ENCODE measurements at regions of chr15 and their contacts with region 1.

Region 1: DNA sequence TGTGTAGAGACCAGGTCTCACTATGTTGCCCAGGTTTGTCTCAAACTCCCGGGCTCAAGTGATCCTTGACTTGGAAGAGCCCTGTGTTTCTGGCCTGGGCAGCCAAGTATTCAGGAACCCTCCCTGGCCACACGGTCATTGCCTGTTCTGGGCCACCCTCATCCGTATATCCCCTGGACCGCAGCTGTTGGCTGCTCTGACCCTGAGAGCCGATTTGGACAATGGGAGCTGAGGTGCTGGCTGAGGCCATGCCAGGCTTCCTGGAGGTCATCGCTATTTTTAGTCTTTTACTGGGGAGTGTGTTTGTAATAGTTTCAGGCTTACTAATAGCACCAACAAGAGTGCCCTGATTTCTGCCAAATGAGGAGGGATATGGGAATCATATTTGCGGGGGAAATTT is 60.7 kb downstream of the ADAMTS7 start:
- DNase-seq: no peak
- ATAC-seq: no peak
- H3K4me3 Mint-ChIP-seq: peak overlapping the region; percentile 44
- H3K27ac Mint-ChIP-seq: peak overlapping the region; percentile 18
- H3K4me1 Mint-ChIP-seq: peaks cover 8% of the 10 kb centered on the region
- H3K27me3 Mint-ChIP-seq: no peaks in the 10 kb centered on the region
- CTCF ChIP-seq: no peak

Region 2: GRCh38 chr15:78149068-78149804 is 601.3 kb before region 1 on chr15 and contains the start of gene IDH3A:
- CTCF ChIA-PET with region 1: no interaction called
- POLR2A ChIA-PET with region 1: no interaction called
- intact Hi-C with region 1: no loop called
- DNase-seq: peak; percentile 99
- ATAC-seq: peak; percentile 97
- H3K4me3 Mint-ChIP-seq: peak within 1 kb of the TSS; percentile 94
- H3K27ac Mint-ChIP-seq: peak within 1 kb of the TSS; percentile 91
- H3K4me1 Mint-ChIP-seq: peaks cover 46% of the 10 kb centered on the region
- H3K27me3 Mint-ChIP-seq: no peaks in the 10 kb centered on the region
- CTCF ChIP-seq: no peak
- total RNA-seq, gene IDH3A: 111 and 124 TPM in 2 replicates

Region 3: GRCh38 chr15:78308422-78309032 is 442.0 kb before region 1 on chr15:
- CTCF ChIA-PET with region 1: no interaction called
- POLR2A ChIA-PET with region 1: no interaction called
- intact Hi-C with region 1: loop called (anchors 2 kb)
- DNase-seq: no peak
- ATAC-seq: peak; percentile 61
- H3K4me3 Mint-ChIP-seq: no peak overlapping the region
- H3K27ac Mint-ChIP-seq: no peak overlapping the region
- H3K4me1 Mint-ChIP-seq: no peaks in the 10 kb centered on the region
- H3K27me3 Mint-ChIP-seq: peaks cover 13% of the 10 kb centered on the region
- CTCF ChIP-seq: no peak

Region 4: DNA sequence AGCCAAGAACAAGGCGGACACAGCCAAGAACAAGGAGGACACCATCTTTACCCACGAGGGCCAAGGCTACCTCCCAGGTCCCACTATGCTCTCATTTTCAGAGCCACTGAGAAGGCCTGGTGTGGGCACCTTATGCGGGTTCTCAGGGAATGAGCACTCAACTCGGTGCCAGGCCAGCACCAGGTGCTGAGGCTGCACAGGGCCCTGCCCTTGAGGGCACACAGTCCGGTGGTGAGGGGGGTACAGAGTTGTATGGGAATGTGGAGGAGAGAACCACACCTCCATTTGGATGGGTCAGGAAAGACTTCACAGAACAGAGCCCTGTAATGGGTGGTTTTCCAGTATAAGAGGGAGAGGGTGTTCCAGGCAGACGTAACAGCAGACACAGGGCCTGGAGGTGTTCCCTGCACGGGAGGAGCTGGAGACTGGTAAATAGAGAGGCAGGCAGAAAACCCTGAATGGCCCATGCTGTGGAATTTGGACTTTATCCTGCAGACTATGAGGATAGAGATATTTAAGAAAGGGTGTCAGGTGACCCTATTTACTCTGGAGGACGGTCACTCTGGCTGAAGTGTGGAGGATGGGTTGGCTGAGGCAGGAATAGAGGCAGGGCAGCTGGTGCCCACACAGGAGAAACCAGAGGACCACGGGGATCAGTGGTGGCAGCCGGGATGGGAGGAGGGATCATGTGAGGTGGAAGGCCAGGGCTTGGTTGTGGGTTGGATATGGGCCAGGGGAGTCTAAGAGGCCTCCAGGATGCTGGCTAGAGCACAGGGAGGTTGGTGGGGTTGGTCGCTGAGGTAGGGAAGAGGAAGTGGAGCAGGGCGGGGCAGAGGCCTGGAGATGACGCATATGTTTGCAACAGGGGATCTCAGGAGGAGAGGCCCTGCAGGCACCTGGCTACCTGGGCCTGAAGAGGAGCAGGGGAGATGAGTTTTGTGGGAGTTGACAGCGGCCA is 375.9 kb before region 1 on chr15:
- CTCF ChIA-PET with region 1: no interaction called
- POLR2A ChIA-PET with region 1: no interaction called
- intact Hi-C with region 1: no loop called
- DNase-seq: no peak
- ATAC-seq: no peak
- H3K4me3 Mint-ChIP-seq: no peak overlapping the region
- H3K27ac Mint-ChIP-seq: no peak overlapping the region
- H3K4me1 Mint-ChIP-seq: no peaks in the 10 kb centered on the region
- H3K27me3 Mint-ChIP-seq: peaks cover 15% of the 10 kb centered on the region
- CTCF ChIP-seq: no peak

Region 5: DNA sequence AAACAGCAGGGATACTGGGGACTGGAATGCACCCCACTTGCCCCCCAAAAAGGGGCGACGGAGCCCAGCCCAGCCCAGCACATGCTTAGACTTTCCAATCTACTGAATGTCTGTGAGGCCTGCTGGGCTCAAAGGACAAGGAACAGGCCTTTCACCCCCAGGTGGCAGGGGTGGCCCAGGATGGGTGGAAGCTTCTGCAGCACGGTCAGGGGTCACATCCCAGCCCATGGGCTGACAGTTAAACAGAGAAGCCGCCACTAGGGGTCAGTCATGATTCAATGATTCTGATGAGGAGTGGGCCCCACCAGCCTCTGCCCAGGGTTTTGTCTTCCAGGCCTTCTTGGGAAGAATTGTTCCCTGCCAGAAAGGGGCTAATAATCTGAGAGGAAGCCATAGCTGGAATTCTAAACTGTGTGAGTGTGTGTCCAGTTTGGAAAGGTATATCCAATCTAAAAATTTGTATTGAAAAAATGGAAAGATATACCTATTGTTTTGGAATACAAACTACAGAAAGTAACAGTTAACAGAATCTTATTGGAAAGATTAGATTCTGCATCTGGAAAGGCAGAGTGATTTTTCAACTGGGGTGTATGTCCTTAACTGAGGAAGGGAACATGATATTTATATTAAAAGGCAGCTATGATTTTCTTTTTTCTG is 111.8 kb before region 1 on chr15:
- CTCF ChIA-PET with region 1: interaction called, 4 read pairs
- POLR2A ChIA-PET with region 1: no interaction called
- intact Hi-C with region 1: loop called (anchors 1 kb)
- DNase-seq: no peak
- ATAC-seq: peak; percentile 69
- H3K4me3 Mint-ChIP-seq: no peak overlapping the region
- H3K27ac Mint-ChIP-seq: no peak overlapping the region
- H3K4me1 Mint-ChIP-seq: peaks cover 11% of the 10 kb centered on the region
- H3K27me3 Mint-ChIP-seq: peaks cover 9% of the 10 kb centered on the region
- CTCF ChIP-seq: no peak

Measured in activated B cell treated with CpG ODN at 0.5 μM for 24 hours (primary cell).